Posterior vena cava (tissue), 2 donors: ENCODE measurements at regions of chr15 and their contacts with region 1.

Region 1: GRCh38 chr15:80609512-80609946 is 85.6 kb upstream of the ABHD17C start:
- DNase-seq: no peak

Region 2: DNA sequence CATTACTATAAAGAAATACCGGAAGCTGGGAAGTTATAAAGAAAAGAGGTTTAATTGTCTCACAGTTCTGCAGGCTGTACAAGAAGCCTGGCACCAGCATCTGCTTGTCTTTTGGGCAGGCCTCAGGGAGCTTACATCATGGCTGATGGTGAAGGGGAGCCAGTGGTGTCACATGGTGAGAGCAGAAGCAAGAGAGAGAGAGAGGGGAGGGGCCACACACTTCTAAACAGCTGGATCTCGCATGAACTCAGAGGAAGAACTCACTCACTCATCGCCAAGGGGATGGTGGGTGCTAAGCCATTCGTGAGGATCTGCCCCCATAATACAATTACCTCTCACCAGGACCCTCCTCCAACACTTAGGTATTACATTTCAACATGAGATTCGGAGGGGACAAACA is 1378.8 kb before region 1 on chr15:
- intact Hi-C with region 1: loop called in 1 of 2 experiments (anchors 10 kb)
- DNase-seq: no peak

Region 3: GRCh38 chr15:82045179-82045891 is 1435.8 kb after region 1 on chr15:
- intact Hi-C with region 1: no loop called
- DNase-seq: no peak